Panc1 (cell line): ENCODE measurements at regions of chr21 and their contacts with region 1.

Region 1: GRCh38 chr21:25385911-25386474 is 221.3 kb downstream of the MRPL39 start:
- DNase-seq: peak; percentile 30
- ATAC-seq: no peak
- H3K4me3 ChIP-seq: no peak overlapping the region
- H3K27ac ChIP-seq: no peak overlapping the region
- H3K4me1 ChIP-seq: no peaks in the 10 kb centered on the region
- H3K27me3 ChIP-seq: no peaks in the 10 kb centered on the region
- CTCF ChIP-seq: peak; percentile 73

Region 2: GRCh38 chr21:24456358-24456757 is 929.6 kb before region 1 on chr21:
- CTCF ChIA-PET with region 1: no interaction called
- POLR2A ChIA-PET with region 1: no interaction called
- in situ Hi-C with region 1: no loop called
- intact Hi-C with region 1: no loop called
- DNase-seq: no peak
- ATAC-seq: no peak
- H3K4me3 ChIP-seq: no peak overlapping the region
- H3K27ac ChIP-seq: no peak overlapping the region
- H3K4me1 ChIP-seq: no peaks in the 10 kb centered on the region
- H3K27me3 ChIP-seq: no peaks in the 10 kb centered on the region
- CTCF ChIP-seq: no peak

Region 3: GRCh38 chr21:24895885-24896734 is 489.9 kb before region 1 on chr21:
- CTCF ChIA-PET with region 1: no interaction called
- POLR2A ChIA-PET with region 1: no interaction called
- in situ Hi-C with region 1: no loop called
- intact Hi-C with region 1: loop called (anchors 1 kb)
- DNase-seq: no peak
- ATAC-seq: no peak
- H3K4me3 ChIP-seq: no peak overlapping the region
- H3K27ac ChIP-seq: no peak overlapping the region
- H3K4me1 ChIP-seq: no peaks in the 10 kb centered on the region
- H3K27me3 ChIP-seq: no peaks in the 10 kb centered on the region
- CTCF ChIP-seq: peak; percentile 27

Region 4: DNA sequence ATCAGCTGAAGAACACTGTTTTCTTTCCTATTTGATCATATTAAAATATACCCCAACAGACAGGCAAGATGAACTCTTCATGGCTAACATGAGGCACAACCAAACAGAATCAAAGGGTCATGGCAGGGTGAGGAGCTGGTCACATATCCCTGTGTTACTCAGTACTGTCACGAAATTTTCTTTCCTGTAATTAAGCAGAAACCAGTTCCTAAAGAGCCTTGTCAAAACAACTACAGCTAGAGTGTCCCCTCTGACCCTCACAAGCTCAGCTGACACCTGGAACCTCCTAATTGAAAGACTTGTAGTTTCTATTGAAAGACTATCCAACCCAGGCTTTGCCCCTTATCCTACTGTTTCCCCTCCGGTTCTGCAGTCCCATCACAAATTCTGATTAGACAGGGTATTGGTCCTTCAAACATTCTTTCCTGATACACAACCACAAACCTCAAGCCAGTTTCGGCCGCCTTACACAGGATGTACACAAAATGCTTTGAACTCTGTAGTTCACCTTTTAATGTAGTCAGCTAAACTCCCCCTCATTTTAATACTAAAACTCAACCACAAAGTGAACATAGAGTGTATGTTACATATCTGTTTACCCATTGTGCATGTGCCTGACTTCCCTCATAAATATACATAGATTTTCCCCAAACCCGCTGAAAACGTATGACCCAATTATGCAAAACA is 430.6 kb before region 1 on chr21:
- CTCF ChIA-PET with region 1: no interaction called
- POLR2A ChIA-PET with region 1: no interaction called
- in situ Hi-C with region 1: no loop called
- intact Hi-C with region 1: no loop called
- DNase-seq: no peak
- ATAC-seq: no peak
- H3K4me3 ChIP-seq: no peak overlapping the region
- H3K27ac ChIP-seq: no peak overlapping the region
- H3K4me1 ChIP-seq: no peaks in the 10 kb centered on the region
- H3K27me3 ChIP-seq: no peaks in the 10 kb centered on the region
- CTCF ChIP-seq: no peak

Region 5: GRCh38 chr21:25283720-25284119 is 102.3 kb before region 1 on chr21:
- CTCF ChIA-PET with region 1: no interaction called
- POLR2A ChIA-PET with region 1: no interaction called
- in situ Hi-C with region 1: no loop called
- intact Hi-C with region 1: loop called (anchors 10 kb)
- DNase-seq: no peak
- ATAC-seq: no peak
- H3K4me3 ChIP-seq: no peak overlapping the region
- H3K27ac ChIP-seq: no peak overlapping the region
- H3K4me1 ChIP-seq: no peaks in the 10 kb centered on the region
- H3K27me3 ChIP-seq: no peaks in the 10 kb centered on the region
- CTCF ChIP-seq: peak; percentile 54